ENCODE measurements at regions of chr5 and their contacts with region 1.

Region 1: DNA sequence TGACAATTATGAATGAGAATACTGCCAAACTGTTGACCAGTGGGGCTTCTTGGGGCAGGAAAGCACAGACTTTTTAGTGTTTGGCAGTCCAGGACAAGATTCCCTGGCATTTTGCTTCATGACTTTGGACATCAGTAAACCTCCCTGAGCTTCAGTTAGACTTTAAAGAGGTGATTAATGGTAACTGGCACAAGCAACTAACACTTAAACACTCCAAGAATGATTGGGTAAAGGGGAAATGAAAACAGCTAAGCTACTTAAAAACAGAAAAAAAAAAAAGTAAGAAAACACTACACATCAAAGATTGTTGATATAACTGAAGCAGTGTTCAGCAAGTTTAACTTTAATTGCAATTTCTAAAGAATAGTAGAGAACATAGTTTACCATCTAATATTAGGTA is 13.4 kb downstream of the PAIP1 start:
- DNase-seq: no peak
- H3K4me3 ChIP-seq: no peak overlapping the region
- H3K27ac ChIP-seq: no peak overlapping the region
- H3K4me1 ChIP-seq: no peaks in the 10 kb centered on the region
- H3K27me3 ChIP-seq: no peaks in the 10 kb centered on the region
- CTCF ChIP-seq: no peak
- EP300 ChIP-seq: no peak
- RAD21 ChIP-seq: no peak

Region 2: GRCh38 chr5:43556857-43557542 is 13.6 kb after region 1 on chr5 and contains the start of gene PAIP1:
- CTCF ChIA-PET with region 1: interaction called, 13 read pairs
- POLR2A ChIA-PET with region 1: interaction called, 4 read pairs
- DNase-seq: peak; percentile 94
- H3K4me3 ChIP-seq: peak within 1 kb of the TSS; percentile 90 to 92
- H3K27ac ChIP-seq: peak within 1 kb of the TSS; percentile 86 to 95
- H3K4me1 ChIP-seq: peaks cover 19 to 28% of the 10 kb centered on the region in 2 experiments; a peak in 3 of 4 replicates
- H3K27me3 ChIP-seq: no peaks in the 10 kb centered on the region
- CTCF ChIP-seq: peak; percentile 62
- EP300 ChIP-seq: peak in 1 of 2 experiments; percentile 10; a peak in 1 of 4 replicates
- RAD21 ChIP-seq: no peak
- polyA plus RNA-seq, gene PAIP1: 70.0 and 98.5 TPM in 2 replicates

Measured in SK-N-SH (cell line).